ENCODE measurements at regions of chr21 and their contacts with region 1.

Region 1: GRCh38 chr21:32174810-32175209 is 104.0 kb downstream of the MIS18A start:
- DNase-seq: no peak
- ATAC-seq: no peak
- H3K4me3 ChIP-seq: no peak overlapping the region
- H3K27ac ChIP-seq: no peak overlapping the region
- H3K4me1 ChIP-seq: no peaks in the 10 kb centered on the region
- H3K27me3 ChIP-seq: no peaks in the 10 kb centered on the region
- CTCF ChIP-seq: no peak
- EP300 ChIP-seq: no peak
- POLR2A ChIP-seq: no peak
- RAD21 ChIP-seq: no peak

Region 2: DNA sequence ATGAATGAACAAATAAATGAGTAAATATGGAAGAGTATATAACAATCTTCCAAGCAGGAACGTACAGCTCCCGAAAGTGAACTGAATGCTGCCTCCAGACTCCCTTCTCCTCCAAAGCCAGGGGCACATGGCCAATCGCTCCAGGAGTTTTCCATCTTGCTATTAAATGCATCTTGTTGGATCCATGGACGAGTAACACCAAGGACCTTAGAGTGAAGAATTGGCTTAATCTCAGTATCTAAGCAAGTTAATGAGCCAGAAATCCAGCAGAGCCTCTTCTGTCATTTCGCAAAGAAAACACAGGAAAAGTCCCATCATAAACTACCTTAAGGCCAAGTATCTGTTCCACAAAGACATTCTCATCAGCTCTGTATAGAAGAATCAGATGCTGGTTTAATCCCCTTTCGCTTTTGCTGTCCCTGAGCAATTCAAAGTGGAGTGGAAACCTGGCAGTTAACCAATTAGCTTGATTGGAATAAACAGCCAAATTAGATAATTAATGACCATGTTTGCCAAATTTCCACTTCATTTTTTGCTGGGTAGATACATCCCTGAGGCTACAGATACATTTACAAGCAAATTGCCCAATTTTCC is 12.0 kb before region 1 on chr21:
- CTCF ChIA-PET with region 1: no interaction called
- POLR2A ChIA-PET with region 1: interaction called, 11 read pairs
- in situ Hi-C with region 1: no loop called
- intact Hi-C with region 1: no loop called
- DNase-seq: no peak
- ATAC-seq: no peak
- H3K4me3 ChIP-seq: no peak overlapping the region
- H3K27ac ChIP-seq: no peak overlapping the region
- H3K4me1 ChIP-seq: no peaks in the 10 kb centered on the region
- H3K27me3 ChIP-seq: peaks cover 2 to 15% of the 10 kb centered on the region in 2 experiments; a peak in 2 of 5 replicates
- CTCF ChIP-seq: no peak
- EP300 ChIP-seq: no peak
- POLR2A ChIP-seq: no peak
- RAD21 ChIP-seq: no peak